ENCODE measurements at regions of chr2 and their contacts with region 1.

Region 1: DNA sequence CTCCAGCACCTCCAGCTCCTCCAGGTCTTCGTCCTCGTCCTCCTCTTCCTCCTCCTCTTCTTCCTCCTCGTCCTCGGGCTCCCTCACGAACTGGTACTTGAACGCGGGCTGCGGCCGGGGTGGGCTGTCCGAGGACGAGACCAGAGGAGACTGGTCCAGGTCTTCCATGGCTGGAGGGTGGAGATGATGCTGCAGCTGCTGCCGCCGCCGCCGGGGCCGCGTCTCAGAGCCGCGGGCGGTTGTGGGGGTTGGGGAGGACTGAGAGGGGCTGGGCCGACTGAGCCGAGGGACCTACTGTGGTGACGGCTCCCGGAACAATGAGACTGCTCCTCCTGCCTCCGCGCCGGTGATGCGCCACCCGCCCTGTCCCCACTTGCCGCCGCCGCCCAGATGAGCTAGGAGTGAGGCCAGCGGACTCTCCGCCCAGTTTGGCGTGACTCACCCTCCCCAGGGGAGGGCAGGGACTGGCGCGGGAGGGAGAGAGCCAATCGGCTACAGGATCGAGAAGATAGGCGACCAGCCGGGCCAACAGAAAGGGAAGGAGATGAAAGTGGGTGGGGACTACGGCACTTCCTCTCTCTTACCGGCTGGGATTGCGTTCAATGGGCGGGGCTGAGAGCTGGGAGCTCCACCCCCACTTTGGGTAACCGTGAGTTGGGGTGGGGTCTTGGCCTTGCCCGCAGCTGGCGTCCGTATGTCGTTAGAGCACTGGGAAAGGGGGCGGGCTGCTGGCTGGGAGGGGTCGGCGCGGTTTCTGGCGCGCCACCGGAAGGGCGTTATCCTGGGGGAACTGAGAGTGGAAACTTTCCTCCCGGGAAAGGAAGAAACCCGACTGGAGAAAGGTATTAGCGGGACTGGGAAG is at the start of gene RTN4:
- DNase-seq: peak; percentile 97
- H3K4me3 ChIP-seq: peak within 1 kb of the TSS; percentile 78
- H3K27me3 ChIP-seq: no peaks in the 10 kb centered on the region
- CTCF ChIP-seq: peak; percentile 21; the same call in 1 of the 2 replicates
- polyA plus RNA-seq, gene RTN4: 219 and 400 TPM in 2 replicates

Region 2: GRCh38 chr2:54899576-54900200 is 150.7 kb before region 1 on chr2:
- CTCF ChIA-PET with region 1: interaction called, 17 read pairs
- POLR2A ChIA-PET with region 1: no interaction called
- DNase-seq: no peak
- H3K4me3 ChIP-seq: no peak overlapping the region
- H3K27me3 ChIP-seq: no peaks in the 10 kb centered on the region
- CTCF ChIP-seq: peak; percentile 70

Region 3: DNA sequence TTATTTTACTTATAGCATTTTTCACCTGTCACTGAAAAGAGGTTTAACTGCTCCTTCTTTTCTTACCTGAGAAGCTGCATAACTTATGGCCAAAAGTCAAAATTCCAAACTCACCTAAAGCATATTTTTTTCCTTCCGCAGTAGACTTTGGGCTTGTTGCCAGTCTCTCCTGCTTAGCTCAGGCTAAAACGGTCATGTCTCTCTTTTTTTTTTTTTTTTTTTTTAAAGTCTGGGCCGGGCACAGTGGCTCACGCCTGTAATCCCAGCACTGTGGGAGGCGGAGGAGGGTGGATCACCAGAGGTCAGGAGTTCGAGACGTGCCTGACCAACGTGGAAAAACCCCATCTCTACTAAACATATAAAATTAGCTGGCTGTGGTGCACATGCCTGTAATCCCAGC is 113.6 kb before region 1 on chr2:
- CTCF ChIA-PET with region 1: no interaction called
- POLR2A ChIA-PET with region 1: no interaction called
- DNase-seq: no peak
- H3K4me3 ChIP-seq: no peak overlapping the region
- H3K27me3 ChIP-seq: no peaks in the 10 kb centered on the region; the same call in 1 of the 2 replicates
- CTCF ChIP-seq: no peak

Region 4: GRCh38 chr2:55014962-55015939 is 35.1 kb before region 1 on chr2:
- CTCF ChIA-PET with region 1: interaction called, 20 read pairs
- POLR2A ChIA-PET with region 1: no interaction called
- DNase-seq: peak; percentile 21
- H3K4me3 ChIP-seq: no peak overlapping the region
- H3K27me3 ChIP-seq: no peaks in the 10 kb centered on the region
- CTCF ChIP-seq: peak; percentile 57

Region 5: DNA sequence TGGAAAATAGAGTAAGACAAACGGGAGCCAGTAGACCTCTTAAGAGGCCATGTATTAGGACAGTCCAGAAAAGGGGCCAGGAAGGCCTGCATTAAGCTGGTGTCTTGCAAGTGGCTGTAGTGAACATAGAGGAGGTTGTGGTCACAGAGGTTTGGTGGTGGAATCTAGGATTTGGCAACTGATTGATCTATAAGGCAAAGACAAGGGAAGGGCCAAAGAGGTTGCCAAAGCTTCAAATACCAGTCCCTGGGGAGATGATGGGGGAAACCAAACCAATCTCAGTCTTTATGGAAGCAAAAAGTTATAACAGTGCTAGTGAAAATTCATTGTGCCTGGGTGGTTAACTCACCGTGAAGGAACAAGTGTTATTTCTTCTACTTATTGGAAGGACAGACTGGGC is 28.6 kb after region 1 on chr2:
- CTCF ChIA-PET with region 1: no interaction called
- POLR2A ChIA-PET with region 1: no interaction called
- DNase-seq: no peak
- H3K4me3 ChIP-seq: no peak overlapping the region
- H3K27me3 ChIP-seq: no peaks in the 10 kb centered on the region
- CTCF ChIP-seq: no peak

Region 6: GRCh38 chr2:55155764-55156281 is 105.5 kb after region 1 on chr2:
- CTCF ChIA-PET with region 1: interaction called, 12 read pairs
- POLR2A ChIA-PET with region 1: interaction called, 11 read pairs
- DNase-seq: peak; percentile 80
- H3K4me3 ChIP-seq: no peak overlapping the region
- H3K27me3 ChIP-seq: no peaks in the 10 kb centered on the region
- CTCF ChIP-seq: no peak

Region 7: DNA sequence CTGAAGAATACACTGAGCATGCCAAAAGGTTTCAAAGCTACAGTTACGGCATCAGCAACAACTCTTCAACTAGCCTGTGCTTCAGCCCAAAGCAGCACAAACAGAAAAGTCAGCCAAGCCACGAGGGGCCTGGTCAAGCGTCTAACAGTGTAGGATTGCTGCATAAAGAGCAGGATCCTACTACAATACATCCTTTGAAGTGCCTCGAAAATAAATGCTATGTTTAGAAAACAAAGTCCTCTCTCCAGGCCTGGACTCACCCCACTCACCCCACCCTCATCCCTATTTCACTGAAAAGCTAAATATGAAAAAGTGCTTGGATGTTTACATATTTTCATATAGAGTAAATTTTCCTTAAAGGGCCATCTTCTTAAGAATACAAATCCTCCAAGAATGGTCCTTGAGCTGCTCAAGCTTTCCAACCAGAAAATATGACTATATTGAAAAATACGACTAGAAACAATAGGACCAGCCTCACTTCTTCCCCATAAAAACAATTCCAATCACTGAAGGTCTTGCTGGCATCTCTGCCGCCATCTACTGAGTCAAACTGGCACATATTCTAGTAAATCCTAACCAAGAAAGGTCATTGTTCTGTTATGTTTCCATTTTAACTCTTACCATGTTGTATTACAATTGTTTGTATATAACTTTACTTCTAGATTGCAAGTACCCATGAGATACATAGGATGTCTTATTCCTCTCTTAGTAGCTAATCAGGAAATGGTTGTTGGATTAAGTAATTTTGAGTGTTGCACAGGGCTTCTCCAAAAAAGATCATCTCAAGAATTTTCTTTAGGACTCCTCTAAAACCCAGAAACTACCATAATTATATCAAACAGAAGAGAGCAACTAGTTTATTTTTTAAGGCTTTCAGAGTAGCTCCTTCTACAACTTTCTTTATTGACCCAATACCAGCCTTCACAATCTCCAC is 118.1 kb after region 1 on chr2:
- CTCF ChIA-PET with region 1: interaction called, 153 read pairs
- POLR2A ChIA-PET with region 1: interaction called, 23 read pairs
- DNase-seq: peak; percentile 36
- H3K4me3 ChIP-seq: no peak overlapping the region
- H3K27me3 ChIP-seq: no peaks in the 10 kb centered on the region
- CTCF ChIP-seq: peak; percentile 73

Region 8: GRCh38 chr2:55175254-55176025 is 125.1 kb after region 1 on chr2:
- CTCF ChIA-PET with region 1: interaction called, 153 read pairs
- POLR2A ChIA-PET with region 1: interaction called, 23 read pairs
- DNase-seq: no peak
- H3K4me3 ChIP-seq: no peak overlapping the region
- H3K27me3 ChIP-seq: no peaks in the 10 kb centered on the region
- CTCF ChIP-seq: peak; percentile 55

Measured in BJ (cell line).